Heart right ventricle (tissue), 16 donors: ENCODE measurements at regions of chr2 and their contacts with region 1.

Region 1: GRCh38 chr2:158903711-158904443 is 64.6 kb upstream of the TANC1 start:
- DNase-seq: no peak
- ATAC-seq: no peak
- H3K4me3 ChIP-seq: no peak overlapping the region
- H3K27ac ChIP-seq: no peak overlapping the region
- H3K4me1 ChIP-seq: peaks cover 0 to 6% (median 0%) of the 10 kb centered on the region in 9 donors
- H3K27me3 ChIP-seq: no peaks in the 10 kb centered on the region
- CTCF ChIP-seq: no peak

Region 2: DNA sequence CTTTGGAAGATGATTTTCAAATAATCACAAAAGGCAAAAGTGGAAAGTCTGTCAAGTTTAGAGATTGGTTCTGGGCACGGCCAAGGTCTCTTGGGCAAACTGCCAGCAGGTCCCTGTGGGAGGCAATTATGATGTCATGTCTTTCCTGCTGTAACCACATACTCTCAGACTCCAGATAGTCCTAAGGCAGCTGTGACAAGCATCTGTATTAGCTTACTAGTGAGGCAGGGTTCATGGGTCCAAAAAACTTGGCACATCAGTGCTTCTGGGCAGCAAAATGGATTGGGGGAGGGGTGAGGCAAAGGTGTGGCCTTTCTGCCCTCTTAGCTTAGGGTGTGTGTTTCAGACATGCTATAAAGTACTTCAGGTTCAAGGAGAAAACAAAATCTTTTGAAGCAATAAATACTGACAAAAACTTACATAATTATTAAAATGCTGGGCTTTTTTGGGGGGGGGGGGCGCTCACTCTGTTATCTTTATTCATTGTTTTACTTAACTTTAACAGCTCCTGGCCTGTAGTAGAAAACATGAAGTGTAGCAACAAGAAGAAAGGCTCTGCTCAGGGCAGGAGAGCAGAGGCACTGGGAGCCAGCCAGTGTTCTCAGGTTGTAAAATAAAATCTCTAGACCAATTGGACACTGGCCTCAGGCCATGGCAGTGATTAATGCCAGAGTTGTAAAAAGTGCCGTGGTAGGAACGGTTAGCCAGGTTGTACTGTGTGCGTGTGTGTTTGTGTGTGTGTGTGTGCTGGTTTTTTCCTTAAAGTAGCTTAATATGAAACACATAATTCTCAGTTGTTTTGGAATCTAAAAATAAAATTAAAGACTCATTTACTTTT is 50.3 kb after region 1 on chr2:
- intact Hi-C with region 1: loop called in 1 of 10 experiments (anchors 5 kb)
- DNase-seq: peak; percentile 81 to 86
- ATAC-seq: peak; percentile 79 to 95 (median 91)
- H3K4me3 ChIP-seq: no peak overlapping the region
- H3K27ac ChIP-seq: peak overlapping the region in 9 of 10 donors; percentile 1 to 77 (median 59)
- H3K4me1 ChIP-seq: peaks cover 6 to 33% (median 24%) of the 10 kb centered on the region in 9 donors
- H3K27me3 ChIP-seq: no peaks in the 10 kb centered on the region
- CTCF ChIP-seq: no peak

Region 3: DNA sequence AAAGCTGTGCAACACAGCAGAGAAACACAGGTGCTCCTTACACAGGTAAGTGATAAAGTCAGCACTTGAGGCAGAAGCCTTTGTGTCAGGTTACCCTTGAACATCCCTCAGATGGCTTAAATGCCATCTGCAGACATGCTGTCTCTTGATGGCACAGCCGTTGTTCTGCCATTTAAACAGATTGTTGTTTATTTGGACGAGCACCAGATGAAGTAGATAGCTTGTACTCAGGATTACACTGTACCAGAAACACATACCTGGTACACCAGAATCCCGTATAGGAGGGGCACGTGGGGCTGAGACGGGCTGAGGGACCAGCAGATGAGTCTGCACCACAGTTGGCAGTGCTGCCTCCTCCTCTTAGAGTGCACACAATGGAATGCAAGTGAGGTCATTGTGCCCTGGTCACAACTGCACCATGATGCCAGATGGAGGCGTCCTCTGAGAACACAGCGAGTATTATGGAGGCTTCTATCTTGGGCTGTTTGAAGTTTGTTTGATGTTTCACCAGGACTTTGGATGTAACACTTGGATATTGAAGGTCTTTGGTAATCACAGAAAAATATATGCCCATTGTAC is 207.6 kb after region 1 on chr2:
- intact Hi-C with region 1: loop called in 1 of 10 experiments (anchors 1 kb)
- DNase-seq: peak in 1 of 2 donors; percentile 64
- ATAC-seq: peak; percentile 36 to 88 (median 78)
- H3K4me3 ChIP-seq: no peak overlapping the region
- H3K27ac ChIP-seq: peak overlapping the region in 6 of 10 donors; percentile 31 to 68 (median 59)
- H3K4me1 ChIP-seq: peaks cover 0 to 81% (median 35%) of the 10 kb centered on the region in 9 donors
- H3K27me3 ChIP-seq: no peaks in the 10 kb centered on the region
- CTCF ChIP-seq: peak in 1 of 9 donors; percentile 3

Region 4: DNA sequence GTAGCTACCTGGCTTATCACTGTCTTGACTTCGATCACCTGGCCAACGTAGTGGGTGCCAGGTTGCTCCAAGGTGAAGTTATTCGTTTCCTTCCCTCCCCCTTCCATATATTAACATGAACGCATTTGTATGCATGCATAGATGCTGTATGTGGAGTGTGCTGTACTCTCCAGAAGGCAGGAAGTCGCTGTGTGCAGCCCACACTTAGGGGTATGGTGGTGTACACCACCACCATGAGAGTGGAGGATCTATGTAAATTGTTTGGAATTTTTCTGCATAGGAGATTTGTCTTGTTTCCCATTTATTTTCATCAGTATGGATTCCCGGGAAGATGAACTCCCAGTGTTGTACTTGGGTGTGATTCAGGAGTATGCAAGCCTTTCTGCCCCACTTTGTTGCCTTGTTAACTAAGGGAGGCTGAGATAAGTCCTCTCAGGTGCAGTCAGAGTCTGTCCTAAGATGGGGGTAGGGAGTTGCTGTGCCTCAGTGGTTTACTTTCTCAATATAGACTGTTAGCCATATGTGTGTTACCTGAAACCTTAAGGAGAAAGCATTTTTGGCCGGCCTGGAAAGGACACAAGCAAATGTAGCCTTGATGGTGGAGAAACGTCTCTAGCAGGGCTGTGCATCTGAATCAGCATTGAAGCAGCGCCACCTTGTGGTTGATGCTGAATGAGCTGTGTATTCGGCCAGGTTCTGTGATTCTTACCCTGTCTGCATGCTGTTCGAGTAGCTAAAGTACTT is 214.4 kb after region 1 on chr2:
- intact Hi-C with region 1: loop called (anchors 1 to 2 kb)
- DNase-seq: peak; percentile 82 to 92
- ATAC-seq: peak; percentile 79 to 96 (median 88)
- H3K4me3 ChIP-seq: no peak overlapping the region
- H3K27ac ChIP-seq: peak overlapping the region in 8 of 10 donors; percentile 7 to 81 (median 75)
- H3K4me1 ChIP-seq: peaks cover 4 to 64% (median 25%) of the 10 kb centered on the region in 9 donors
- H3K27me3 ChIP-seq: no peaks in the 10 kb centered on the region
- CTCF ChIP-seq: peak; percentile 89 to 95 (median 94)

Region 5: GRCh38 chr2:159185401-159186130 is 281.7 kb after region 1 on chr2:
- intact Hi-C with region 1: loop called in 2 of 10 experiments (anchors 5 to 10 kb)
- DNase-seq: peak in 1 of 2 donors; percentile 33
- ATAC-seq: peak in 7 of 8 donors; percentile 36 to 57 (median 40)
- H3K4me3 ChIP-seq: no peak overlapping the region
- H3K27ac ChIP-seq: peak overlapping the region in 5 of 10 donors; percentile 9 to 75 (median 21)
- H3K4me1 ChIP-seq: peaks cover 0 to 61% (median 34%) of the 10 kb centered on the region in 9 donors
- H3K27me3 ChIP-seq: no peaks in the 10 kb centered on the region
- CTCF ChIP-seq: peak in 8 of 9 donors; percentile 9 to 57 (median 46)

Region 6: DNA sequence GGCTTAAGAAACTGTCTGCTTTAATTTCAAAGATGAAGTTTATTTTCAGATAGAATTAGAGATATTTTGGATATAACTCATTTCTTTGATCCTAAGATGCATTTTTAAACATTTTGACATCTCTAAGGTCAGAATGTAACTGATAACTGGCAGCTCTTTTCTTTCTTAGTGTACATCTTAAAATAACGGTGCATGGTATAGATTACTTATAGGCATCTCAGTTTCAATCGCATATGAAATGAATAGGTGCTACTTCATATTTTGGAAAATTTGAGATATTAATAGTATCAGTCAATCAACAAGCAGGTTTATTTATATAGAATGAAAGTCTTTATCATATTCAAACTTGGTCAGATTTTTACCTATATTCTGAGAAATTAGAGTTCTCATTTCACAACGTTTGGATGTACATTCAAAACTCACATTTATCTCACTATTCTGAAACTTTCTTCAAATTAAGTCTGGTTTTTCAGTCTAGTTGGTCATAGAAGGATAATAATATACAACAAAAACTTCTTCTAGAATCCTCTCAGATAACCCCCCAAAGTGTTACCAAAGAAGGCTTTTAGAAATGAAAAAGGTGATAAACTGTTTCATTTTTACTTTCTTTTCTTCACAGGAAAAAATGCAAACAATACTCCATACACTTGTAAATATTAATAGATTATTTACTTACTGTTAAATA is 505.4 kb after region 1 on chr2:
- intact Hi-C with region 1: no loop called
- DNase-seq: no peak
- ATAC-seq: no peak
- H3K4me3 ChIP-seq: no peak overlapping the region
- H3K27ac ChIP-seq: no peak overlapping the region
- H3K4me1 ChIP-seq: no peaks in the 10 kb centered on the region
- H3K27me3 ChIP-seq: no peaks in the 10 kb centered on the region
- CTCF ChIP-seq: no peak